Dendritic cell treated with granulocyte-macrophage colony-stimulating factor and Interleukin-4, amounts not matched to agents 40 ng/mL and 50 ng/mL, for 4 days (primary cell): ENCODE measurements at regions of chr12 and their contacts with region 1.

Region 1: GRCh38 chr12:10094646-10095395 is 4.0 kb downstream of the CLEC1A start:
- H3K4me3 Mint-ChIP-seq: no peak overlapping the region
- H3K27ac Mint-ChIP-seq: no peak overlapping the region
- H3K4me1 Mint-ChIP-seq: peaks cover 49% of the 10 kb centered on the region
- H3K27me3 Mint-ChIP-seq: no peaks in the 10 kb centered on the region

Region 2: GRCh38 chr12:10121278-10121677 is 26.5 kb after region 1 on chr12:
- intact Hi-C with region 1: loop called (anchors 2 kb)
- H3K4me3 Mint-ChIP-seq: peak overlapping the region; percentile 73
- H3K27ac Mint-ChIP-seq: peak overlapping the region; percentile 97
- H3K4me1 Mint-ChIP-seq: peaks cover 56% of the 10 kb centered on the region
- H3K27me3 Mint-ChIP-seq: no peaks in the 10 kb centered on the region

Region 3: GRCh38 chr12:10128686-10129085 is 33.9 kb after region 1 on chr12:
- intact Hi-C with region 1: loop called (anchors 2 kb)
- H3K4me3 Mint-ChIP-seq: peak overlapping the region; percentile 84
- H3K27ac Mint-ChIP-seq: peak overlapping the region; percentile 97
- H3K4me1 Mint-ChIP-seq: peaks cover 49% of the 10 kb centered on the region
- H3K27me3 Mint-ChIP-seq: no peaks in the 10 kb centered on the region